OCI-LY7 (cell line): ENCODE measurements at regions of chr1 and their contacts with region 1.

Region 1: DNA sequence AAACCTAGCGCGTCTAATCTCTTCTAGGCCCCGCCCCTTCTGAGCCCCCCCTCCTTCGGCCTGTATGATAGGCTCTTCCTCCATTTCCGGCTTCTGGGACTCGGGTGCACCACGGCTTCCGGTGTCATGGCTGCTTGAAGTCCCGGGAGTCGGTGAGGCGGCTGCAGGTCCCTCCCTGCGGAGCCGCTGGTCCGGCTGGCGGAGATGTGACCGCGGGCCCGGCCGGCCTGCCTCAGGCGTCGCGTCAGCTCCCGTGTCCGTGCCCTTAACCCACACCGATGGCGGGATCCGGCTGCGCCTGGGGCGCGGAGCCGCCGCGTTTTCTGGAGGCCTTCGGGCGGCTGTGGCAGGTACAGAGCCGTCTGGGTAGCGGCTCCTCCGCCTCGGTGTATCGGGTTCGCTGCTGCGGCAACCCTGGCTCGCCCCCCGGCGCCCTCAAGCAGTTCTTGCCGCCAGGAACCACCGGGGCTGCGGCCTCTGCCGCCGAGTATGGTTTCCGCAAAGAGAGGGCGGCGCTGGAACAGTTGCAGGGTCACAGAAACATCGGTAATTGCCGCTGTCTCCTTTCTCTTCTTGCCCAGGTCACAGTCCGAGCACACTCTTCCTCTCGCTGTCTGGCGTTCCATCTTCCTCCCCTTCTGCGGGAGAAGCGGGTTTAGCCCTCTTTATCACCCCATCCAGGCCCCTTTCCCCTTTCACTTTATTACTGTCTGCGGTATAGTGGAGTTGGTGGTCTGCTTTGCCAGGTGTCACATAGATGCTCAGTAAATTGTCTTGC is at the start of gene UHMK1:
- DNase-seq: peak; percentile 95
- H3K4me3 ChIP-seq: peak within 1 kb of the TSS; percentile 95
- H3K27ac ChIP-seq: peak within 1 kb of the TSS; percentile 93
- H3K4me1 ChIP-seq: peaks cover 23% of the 10 kb centered on the region
- CTCF ChIP-seq: 0 out of 2 replicates have a peak, but pooled peaks have one; percentile 26
- total RNA-seq, gene UHMK1: 27.7 and 27.8 TPM in 2 replicates

Region 2: GRCh38 chr1:162561037-162561616 is 63.2 kb after region 1 on chr1:
- CTCF ChIA-PET with region 1: no interaction called
- POLR2A ChIA-PET with region 1: interaction called, 8 read pairs
- intact Hi-C with region 1: loop called (anchors 1 kb)
- DNase-seq: peak; percentile 95
- H3K4me3 ChIP-seq: peak overlapping the region; percentile 83
- H3K27ac ChIP-seq: no peak overlapping the region
- H3K4me1 ChIP-seq: peaks cover 14% of the 10 kb centered on the region
- CTCF ChIP-seq: no peak

Region 3: DNA sequence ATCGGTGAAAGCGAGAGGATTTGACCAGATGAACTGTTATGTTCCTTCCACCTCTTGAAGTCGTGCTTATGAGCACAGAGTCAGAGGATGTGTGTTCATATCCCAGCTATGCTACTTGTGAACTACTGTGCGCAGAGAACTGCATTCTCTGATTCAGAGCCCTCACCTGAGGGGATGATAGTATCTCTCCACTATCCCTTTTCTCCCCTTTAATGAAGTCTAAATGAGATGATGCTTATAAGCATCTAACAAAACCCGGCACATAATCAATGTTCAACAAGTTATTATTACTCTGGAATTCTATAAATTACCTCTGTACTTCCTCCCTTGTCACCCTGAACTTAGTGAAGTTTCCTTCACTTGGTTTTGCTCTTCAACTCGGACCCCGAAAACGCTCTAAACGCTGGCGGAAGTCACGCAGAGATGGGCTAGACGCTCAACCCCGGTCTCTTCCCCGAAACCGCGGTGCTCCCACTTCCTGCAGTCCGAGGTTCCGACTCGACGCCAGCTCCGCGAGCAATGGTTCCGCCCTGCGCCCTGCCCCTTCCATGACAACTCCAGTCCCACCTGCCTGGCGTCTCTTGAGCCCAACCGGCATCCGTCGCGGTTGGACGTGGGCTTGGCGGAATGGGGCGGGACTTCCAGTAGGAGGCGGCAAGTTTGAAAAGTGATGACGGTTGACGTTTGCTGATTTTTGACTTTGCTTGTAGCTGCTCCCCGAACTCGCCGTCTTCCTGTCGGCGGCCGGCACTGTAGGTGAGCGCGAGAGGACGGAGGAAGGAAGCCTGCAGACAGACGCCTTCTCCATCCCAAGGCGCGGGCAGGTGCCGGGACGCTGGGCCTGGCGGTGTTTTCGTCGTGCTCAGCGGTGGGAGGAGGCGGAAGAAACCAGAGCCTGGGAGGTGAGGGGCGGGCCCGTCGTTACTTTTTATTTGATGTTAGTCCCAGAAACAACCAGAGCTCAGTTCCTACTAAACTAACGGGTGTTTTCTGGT is 823.7 kb after region 1 on chr1 and contains the start of gene NUF2:
- CTCF ChIA-PET with region 1: no interaction called
- POLR2A ChIA-PET with region 1: no interaction called
- intact Hi-C with region 1: loop called (anchors 5 kb)
- DNase-seq: peak; percentile 98
- H3K4me3 ChIP-seq: peak within 1 kb of the TSS; percentile 85
- H3K27ac ChIP-seq: peak within 1 kb of the TSS; percentile 94
- H3K4me1 ChIP-seq: peaks cover 22% of the 10 kb centered on the region
- CTCF ChIP-seq: no peak
- total RNA-seq, gene NUF2: 76.2 and 86.1 TPM in 2 replicates